ENCODE measurements at regions of chr5 and their contacts with region 1.

Region 1: DNA sequence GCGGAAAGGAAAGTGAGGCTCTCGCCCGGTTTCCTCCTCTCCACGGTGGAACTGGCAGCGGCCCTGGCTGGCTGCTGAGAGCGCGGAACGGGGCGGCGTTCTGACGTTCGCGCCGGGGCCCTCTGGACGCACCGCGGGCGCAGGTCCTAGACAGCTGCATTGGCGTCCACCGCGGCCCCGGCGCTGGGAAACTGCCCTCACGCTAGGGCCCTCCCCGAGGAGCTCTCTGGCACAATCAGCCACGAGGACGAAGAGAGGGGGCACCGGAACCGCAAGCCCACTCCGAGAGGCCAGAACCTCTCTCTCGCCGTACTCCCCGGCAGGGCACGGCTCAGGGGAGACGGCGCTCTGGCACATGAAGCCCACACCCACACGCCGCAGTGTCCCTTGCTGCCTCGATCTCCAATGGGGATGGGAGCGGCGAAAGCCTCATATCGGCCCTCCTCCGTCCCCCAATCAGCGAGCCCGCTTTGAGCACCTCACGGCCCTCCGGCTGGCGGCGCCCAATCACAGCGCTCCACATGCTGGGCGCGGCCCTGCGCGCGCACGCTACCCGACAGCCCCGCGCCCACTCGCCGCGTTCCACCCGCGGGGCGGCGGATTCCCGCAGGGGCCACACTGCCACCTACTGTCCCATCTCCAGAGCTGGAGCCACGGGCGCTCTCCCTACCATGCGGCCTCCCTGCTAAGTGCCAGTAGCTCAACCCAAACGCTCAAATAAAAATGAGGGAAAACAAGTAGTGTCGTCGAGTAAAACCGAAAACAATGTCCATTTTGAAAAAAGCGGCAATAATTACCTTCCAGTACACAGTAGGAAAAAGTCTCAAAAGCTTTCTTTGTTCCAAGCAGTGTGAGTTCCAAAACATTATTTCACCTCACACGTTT is 11.8 kb downstream of the MRPS27 start:
- DNase-seq: peak; percentile 90 to 99
- H3K4me3 ChIP-seq: peak overlapping the region; percentile 56 to 79
- H3K27ac ChIP-seq: peak overlapping the region; percentile 91 to 95
- H3K4me1 ChIP-seq: peaks cover 3 to 19% of the 10 kb centered on the region in 2 donors
- H3K27me3 ChIP-seq: no peaks in the 10 kb centered on the region
- CTCF ChIP-seq: peak; percentile 91 to 95 (median 91)

Region 2: GRCh38 chr5:71586941-71587765 is 721.1 kb before region 1 on chr5 and contains the start of gene MCCC2:
- intact Hi-C with region 1: loop called (anchors 10 kb)
- DNase-seq: peak; percentile 91 to 99
- H3K4me3 ChIP-seq: peak within 1 kb of the TSS; percentile 81 to 84
- H3K27ac ChIP-seq: peak within 1 kb of the TSS; percentile 89 to 92
- H3K4me1 ChIP-seq: peaks cover 0 to 13% of the 10 kb centered on the region in 2 donors
- H3K27me3 ChIP-seq: no peaks in the 10 kb centered on the region
- CTCF ChIP-seq: no peak
- total RNA-seq, gene MCCC2: 13.8 TPM

Region 3: DNA sequence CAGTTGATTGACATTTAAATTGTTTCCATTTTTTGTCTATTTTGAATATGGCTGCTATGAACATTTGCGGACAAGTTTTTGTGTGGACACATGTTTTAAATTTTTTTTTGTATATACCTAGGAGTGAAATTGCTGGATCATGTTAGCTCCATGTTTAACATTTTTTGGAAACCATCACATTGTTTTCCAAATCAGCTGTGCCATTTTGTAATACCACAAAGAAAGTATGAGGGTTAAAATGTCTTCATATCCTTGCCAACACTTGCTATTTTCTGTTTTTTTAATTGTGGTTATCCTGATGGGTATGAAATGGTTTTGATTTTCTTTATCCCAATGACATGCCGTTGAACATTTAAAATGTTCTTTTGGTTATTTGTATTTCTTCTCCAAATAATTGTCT is 537.0 kb before region 1 on chr5:
- intact Hi-C with region 1: no loop called
- DNase-seq: no peak
- H3K4me3 ChIP-seq: no peak overlapping the region
- H3K27ac ChIP-seq: no peak overlapping the region
- H3K4me1 ChIP-seq: no peaks in the 10 kb centered on the region
- H3K27me3 ChIP-seq: no peaks in the 10 kb centered on the region
- CTCF ChIP-seq: no peak

Region 4: GRCh38 chr5:71932655-71933338 is 375.4 kb before region 1 on chr5:
- intact Hi-C with region 1: loop called (anchors 2 kb)
- DNase-seq: peak; percentile 79 to 94
- H3K4me3 ChIP-seq: no peak overlapping the region
- H3K27ac ChIP-seq: peak overlapping the region; percentile 94 to 96
- H3K4me1 ChIP-seq: peaks cover 10 to 15% of the 10 kb centered on the region in 2 donors
- H3K27me3 ChIP-seq: no peaks in the 10 kb centered on the region
- CTCF ChIP-seq: peak in 2 of 3 experiments; percentile 7 to 13

Region 5: GRCh38 chr5:72108202-72109061 is 199.8 kb before region 1 on chr5:
- intact Hi-C with region 1: loop called (anchors 1 kb)
- DNase-seq: peak; percentile 56 to 93
- H3K4me3 ChIP-seq: peak overlapping the region; percentile 72 to 94
- H3K27ac ChIP-seq: peak overlapping the region; percentile 94 to 97
- H3K4me1 ChIP-seq: peaks cover 0 to 14% of the 10 kb centered on the region in 2 donors
- H3K27me3 ChIP-seq: no peaks in the 10 kb centered on the region
- CTCF ChIP-seq: no peak

Region 6: DNA sequence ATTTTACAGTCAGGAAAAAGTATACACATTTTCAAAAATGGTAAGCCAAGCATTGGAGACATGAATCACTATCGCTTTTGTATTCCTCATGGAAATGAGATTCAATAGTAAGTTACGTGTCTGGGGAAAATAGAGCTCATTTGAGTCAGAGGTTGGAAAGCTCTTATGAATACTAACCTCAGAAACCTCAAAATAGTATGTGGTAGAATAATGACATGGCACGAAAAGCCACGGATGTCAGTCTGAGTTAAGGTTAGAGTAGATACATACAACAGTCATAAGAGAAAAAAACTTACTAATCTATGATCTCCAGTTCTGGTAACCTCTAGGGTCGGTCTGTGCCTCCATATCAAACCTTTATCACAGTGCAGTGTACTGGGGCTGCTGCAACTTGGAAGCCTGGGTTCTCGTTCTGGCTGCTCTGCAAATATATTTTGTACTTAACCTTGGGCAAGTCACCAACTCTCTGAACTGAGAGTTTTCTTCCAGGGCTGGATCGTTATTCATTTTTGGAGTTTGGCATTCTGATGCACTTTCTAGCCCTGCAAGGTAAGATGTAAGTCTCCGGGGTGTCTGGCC is 169.2 kb before region 1 on chr5:
- intact Hi-C with region 1: loop called (anchors 2 kb)
- DNase-seq: no peak
- H3K4me3 ChIP-seq: peak overlapping the region; percentile 35 to 43
- H3K27ac ChIP-seq: peak overlapping the region; percentile 93 to 95
- H3K4me1 ChIP-seq: peaks cover 26 to 89% of the 10 kb centered on the region in 2 donors
- H3K27me3 ChIP-seq: no peaks in the 10 kb centered on the region
- CTCF ChIP-seq: no peak

Region 7: DNA sequence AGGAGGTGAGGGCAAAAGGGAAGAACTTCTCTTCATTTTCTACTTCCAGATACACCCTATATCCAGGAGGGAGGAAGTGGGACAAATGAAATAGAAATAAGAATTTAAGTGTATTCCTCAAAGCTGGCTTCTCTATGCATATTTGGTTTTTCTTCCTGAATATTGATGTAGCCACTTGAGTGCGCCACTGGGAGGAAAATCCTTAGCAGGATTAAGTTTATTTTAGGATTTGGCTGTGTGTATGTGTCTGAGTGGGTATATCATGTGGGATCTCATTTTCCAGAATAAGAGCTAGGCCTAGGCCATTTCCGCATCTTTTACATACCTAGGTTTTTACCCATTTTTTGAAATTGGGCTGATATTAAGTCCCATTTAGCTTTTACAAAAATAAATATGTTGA is 158.5 kb before region 1 on chr5:
- intact Hi-C with region 1: loop called (anchors 5 kb)
- DNase-seq: no peak
- H3K4me3 ChIP-seq: peak overlapping the region in 1 of 2 donors; percentile 6
- H3K27ac ChIP-seq: peak overlapping the region; percentile 93 to 95
- H3K4me1 ChIP-seq: peaks cover 39 to 91% of the 10 kb centered on the region in 2 donors
- H3K27me3 ChIP-seq: no peaks in the 10 kb centered on the region
- CTCF ChIP-seq: peak in 2 of 3 experiments; percentile 31 to 47

Region 8: GRCh38 chr5:72244862-72245371 is 63.3 kb before region 1 on chr5:
- intact Hi-C with region 1: loop called (anchors 2 kb)
- DNase-seq: peak in 1 of 2 donors; percentile 64
- H3K4me3 ChIP-seq: no peak overlapping the region
- H3K27ac ChIP-seq: peak overlapping the region; percentile 79 to 84
- H3K4me1 ChIP-seq: peaks cover 30 to 49% of the 10 kb centered on the region in 2 donors
- H3K27me3 ChIP-seq: no peaks in the 10 kb centered on the region
- CTCF ChIP-seq: peak; percentile 10 to 35 (median 24)

Region 9: DNA sequence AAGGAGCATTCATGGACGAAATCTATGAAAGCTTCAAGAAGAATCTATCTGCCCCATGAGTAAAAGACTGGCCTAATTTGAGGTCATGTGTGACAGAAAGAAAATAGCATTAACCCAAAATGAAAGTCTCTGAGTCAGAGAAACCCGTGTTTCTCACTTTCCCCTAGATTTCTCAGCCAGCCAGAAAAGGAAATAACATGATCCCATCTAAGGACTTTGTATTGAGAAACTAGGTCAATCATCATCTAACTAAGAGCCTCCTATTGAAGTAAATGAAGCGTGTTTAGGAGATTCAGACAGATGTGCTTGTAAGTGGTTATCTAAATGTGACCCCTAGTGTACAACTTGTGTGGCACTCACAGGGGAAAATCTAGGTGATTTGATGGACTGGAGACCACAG is 276.3 kb after region 1 on chr5:
- intact Hi-C with region 1: no loop called
- DNase-seq: no peak
- H3K4me3 ChIP-seq: no peak overlapping the region
- H3K27ac ChIP-seq: peak overlapping the region in 1 of 2 donors; percentile 27
- H3K4me1 ChIP-seq: peaks cover 3% of the 10 kb centered on the region in 2 donors
- H3K27me3 ChIP-seq: no peaks in the 10 kb centered on the region
- CTCF ChIP-seq: peak in 1 of 3 experiments; percentile 9

Measured in ascending aorta (tissue), 2 donors.